ENCODE measurements at regions of chr3 and their contacts with region 1.

Region 1: GRCh38 chr3:33717866-33718594 is at the start of gene CLASP2:
- DNase-seq: peak; percentile 94
- H3K4me3 ChIP-seq: peak within 1 kb of the TSS; percentile 69 to 94 (median 83)
- H3K27ac ChIP-seq: peak within 1 kb of the TSS; percentile 96 to 99 (median 96)
- H3K4me1 ChIP-seq: peaks cover 0 to 16% (median 12%) of the 10 kb centered on the region in 4 donors
- H3K27me3 ChIP-seq: no peaks in the 10 kb centered on the region
- CTCF ChIP-seq: no peak
- EP300 ChIP-seq: no peak
- POLR2A ChIP-seq: peak; percentile 31
- total RNA-seq, gene CLASP2: 77.7 to 122 (median 94.5) TPM

Region 2: DNA sequence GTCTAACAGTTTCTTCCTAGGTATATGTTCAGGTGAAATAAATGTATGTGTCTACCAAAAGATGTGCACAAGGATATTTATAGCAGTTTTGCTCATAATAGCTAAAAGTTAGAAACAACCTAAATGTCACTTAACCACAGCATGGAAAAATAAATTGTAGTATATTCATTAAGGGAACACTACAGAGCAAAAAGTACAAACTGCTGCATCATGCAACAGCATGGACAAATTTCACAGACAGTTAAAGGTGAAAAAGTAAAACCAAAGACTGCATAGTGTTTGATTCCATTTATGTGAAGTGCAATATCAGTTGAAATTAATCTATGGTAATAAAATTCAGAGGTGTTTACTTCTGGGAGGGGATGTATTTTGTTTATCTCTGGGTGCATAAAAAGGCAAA is 378.3 kb before region 1 on chr3:
- intact Hi-C with region 1: no loop called
- DNase-seq: no peak
- H3K4me3 ChIP-seq: no peak overlapping the region
- H3K27ac ChIP-seq: no peak overlapping the region
- H3K4me1 ChIP-seq: no peaks in the 10 kb centered on the region
- H3K27me3 ChIP-seq: no peaks in the 10 kb centered on the region
- CTCF ChIP-seq: no peak
- EP300 ChIP-seq: no peak
- POLR2A ChIP-seq: no peak

Region 3: GRCh38 chr3:33787328-33788009 is 69.4 kb after region 1 on chr3:
- intact Hi-C with region 1: loop called (anchors 1 kb)
- DNase-seq: peak; percentile 73
- H3K4me3 ChIP-seq: peak overlapping the region in 3 of 4 donors; percentile 11 to 29 (median 21)
- H3K27ac ChIP-seq: no peak overlapping the region
- H3K4me1 ChIP-seq: peaks cover 0 to 4% (median 2%) of the 10 kb centered on the region in 4 donors
- H3K27me3 ChIP-seq: no peaks in the 10 kb centered on the region
- CTCF ChIP-seq: peak; percentile 31 to 71 (median 60)
- EP300 ChIP-seq: no peak
- POLR2A ChIP-seq: no peak

Region 4: DNA sequence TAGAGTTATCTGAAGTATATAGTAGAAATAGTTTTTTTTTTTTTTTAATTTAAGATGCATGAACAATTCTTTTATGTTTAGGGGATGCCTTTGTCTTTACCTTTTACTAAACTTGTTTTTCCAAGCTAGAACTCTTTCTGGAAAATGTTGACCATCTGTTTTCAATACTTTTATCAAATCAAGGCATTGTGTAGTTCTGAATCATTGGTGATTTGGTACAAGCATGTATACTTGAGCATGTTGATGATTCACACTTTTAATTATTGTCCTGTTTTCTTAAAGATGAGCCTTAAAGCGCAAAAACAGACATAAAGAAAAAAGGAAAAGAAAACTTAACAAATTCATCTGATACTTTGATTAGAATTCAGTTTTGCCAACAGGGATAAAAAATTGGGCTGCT is 108.7 kb after region 1 on chr3:
- intact Hi-C with region 1: no loop called
- DNase-seq: no peak
- H3K4me3 ChIP-seq: no peak overlapping the region
- H3K27ac ChIP-seq: no peak overlapping the region
- H3K4me1 ChIP-seq: no peaks in the 10 kb centered on the region
- H3K27me3 ChIP-seq: no peaks in the 10 kb centered on the region
- CTCF ChIP-seq: no peak
- EP300 ChIP-seq: no peak
- POLR2A ChIP-seq: no peak